Naive thymus-derived CD4-positive, alpha-beta T cell (primary cell): ENCODE measurements at regions of chrX and their contacts with region 1.

Region 1: DNA sequence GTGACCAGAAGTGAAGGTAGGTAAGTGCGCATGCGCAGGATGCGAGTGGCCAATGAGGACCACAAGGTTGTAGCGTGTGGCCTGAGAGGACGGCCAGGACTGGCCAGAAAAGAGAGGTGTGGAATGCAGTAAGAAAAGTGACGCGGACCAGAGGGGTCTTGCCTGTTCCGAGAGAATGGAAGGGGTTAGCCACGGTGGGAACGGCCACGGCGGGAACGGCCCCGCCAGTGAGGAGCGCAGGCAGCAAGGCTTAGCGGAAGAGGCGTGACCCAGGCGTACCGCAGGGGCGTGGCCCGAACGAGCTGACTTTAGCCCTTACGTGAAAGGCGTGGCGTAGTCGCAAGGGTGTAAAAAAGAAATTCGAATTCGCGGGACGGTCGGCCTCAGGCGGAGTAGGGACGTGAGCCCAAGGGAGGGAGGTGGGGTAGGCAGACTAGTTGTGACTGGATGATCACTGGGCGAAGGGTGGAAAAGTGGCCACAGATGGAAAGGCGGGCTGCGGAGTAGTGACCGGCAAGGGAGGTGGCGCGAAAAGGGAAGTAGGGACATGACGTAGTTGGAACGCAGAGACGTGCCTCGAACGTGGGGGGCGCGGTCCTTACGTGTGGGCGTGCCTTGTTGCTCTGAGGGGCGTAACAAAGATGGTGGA is 10.4 kb upstream of the CLTRN start:
- DNase-seq: peak; percentile 70 to 99 (median 96)
- ATAC-seq: peak; percentile 90
- H3K4me3 ChIP-seq: peak overlapping the region; percentile 87
- H3K4me3 Mint-ChIP-seq: no peak overlapping the region
- H3K27ac ChIP-seq: peak overlapping the region; percentile 96
- H3K27ac Mint-ChIP-seq: no peak overlapping the region
- H3K4me1 ChIP-seq: peaks cover 5 to 11% of the 10 kb centered on the region in 2 donors
- H3K4me1 Mint-ChIP-seq: peaks cover 0 to 17% (median 12%) of the 10 kb centered on the region in 7 donors
- H3K27me3 ChIP-seq: no peaks in the 10 kb centered on the region
- H3K27me3 Mint-ChIP-seq: peaks cover 0 to 5% (median 0%) of the 10 kb centered on the region in 5 donors

Region 2: GRCh38 chrX:15493118-15493962 is 181.6 kb before region 1 on chrX and contains the start of gene PIR:
- CTCF ChIA-PET with region 1: interaction called, 3 read pairs
- POLR2A ChIA-PET with region 1: no interaction called
- intact Hi-C with region 1: loop called (anchors 1 to 10 kb)
- DNase-seq: peak in 8 of 9 donors; percentile 3 to 72 (median 16)
- ATAC-seq: peak; percentile 88
- H3K4me3 ChIP-seq: peak within 1 kb of the TSS; percentile 46
- H3K4me3 Mint-ChIP-seq: peak within 1 kb of the TSS; percentile 75 to 85 (median 82)
- H3K27ac ChIP-seq: no peak within 1 kb of the TSS
- H3K27ac Mint-ChIP-seq: peak within 1 kb of the TSS in 1 of 9 donors; percentile 58
- H3K4me1 ChIP-seq: no peaks in the 10 kb centered on the region
- H3K4me1 Mint-ChIP-seq: peaks cover 2 to 18% (median 9%) of the 10 kb centered on the region in 7 donors
- H3K27me3 ChIP-seq: no peaks in the 10 kb centered on the region
- H3K27me3 Mint-ChIP-seq: peaks cover 0 to 6% (median 4%) of the 10 kb centered on the region in 5 donors
- total RNA-seq, gene PIR: 0.49 to 4.6 (median 0.70) TPM in 3 of 5 experiments, not detected in the others

Region 3: GRCh38 chrX:15737960-15738902 is 63.3 kb after region 1 on chrX and contains the start of gene CA5B:
- CTCF ChIA-PET with region 1: no interaction called
- POLR2A ChIA-PET with region 1: interaction called, 7 read pairs
- intact Hi-C with region 1: loop called (anchors 1 kb)
- DNase-seq: peak; percentile 93 to 100 (median 98)
- ATAC-seq: peak; percentile 98
- H3K4me3 ChIP-seq: peak within 1 kb of the TSS; percentile 82
- H3K4me3 Mint-ChIP-seq: peak within 1 kb of the TSS; percentile 89 to 99 (median 94)
- H3K27ac ChIP-seq: peak within 1 kb of the TSS; percentile 72
- H3K27ac Mint-ChIP-seq: peak within 1 kb of the TSS; percentile 71 to 95 (median 91)
- H3K4me1 ChIP-seq: peaks cover 16 to 19% of the 10 kb centered on the region in 2 donors
- H3K4me1 Mint-ChIP-seq: peaks cover 18 to 60% (median 43%) of the 10 kb centered on the region in 7 donors
- H3K27me3 ChIP-seq: no peaks in the 10 kb centered on the region
- H3K27me3 Mint-ChIP-seq: peaks cover 0 to 2% (median 0%) of the 10 kb centered on the region in 5 donors
- total RNA-seq, gene CA5B: 16.4 to 64.6 (median 39.5) TPM

Region 4: DNA sequence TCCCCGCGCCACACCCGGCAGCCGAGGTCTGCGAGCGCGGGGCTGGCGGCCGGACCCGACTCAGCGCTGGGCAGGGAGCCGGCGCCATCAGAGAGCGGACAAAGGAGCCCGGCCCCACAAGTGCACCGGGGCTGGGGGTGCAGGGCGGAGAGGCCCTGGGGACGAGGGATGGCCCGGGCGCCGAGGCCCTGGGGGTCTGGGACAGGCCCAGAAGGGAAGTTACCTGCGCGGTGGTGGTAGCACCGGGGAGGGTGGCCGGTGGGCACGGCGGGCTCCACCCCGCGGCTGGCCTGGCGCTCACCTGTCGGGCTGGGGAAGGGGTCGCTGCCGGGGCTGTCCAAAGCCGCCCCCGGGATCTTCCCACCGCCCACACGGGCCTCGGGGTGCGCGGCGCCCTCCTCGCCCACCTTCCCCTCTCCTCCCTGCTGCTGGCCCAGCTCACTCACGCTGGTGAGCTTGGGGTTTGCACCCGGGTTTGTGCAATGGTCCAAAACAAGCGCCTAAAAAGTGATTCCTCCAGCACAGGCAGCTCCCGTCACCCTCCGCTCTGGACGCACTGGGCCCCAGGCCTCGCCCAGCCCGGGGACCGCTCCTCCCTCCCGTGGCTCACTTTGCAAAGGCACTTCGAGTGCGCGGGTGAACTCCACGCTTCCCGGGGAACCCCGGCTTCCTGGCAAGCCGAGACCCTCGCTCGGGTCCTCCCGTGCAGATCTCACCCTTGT is 1037.3 kb after region 1 on chrX and contains the start of gene CTPS2:
- CTCF ChIA-PET with region 1: no interaction called
- POLR2A ChIA-PET with region 1: no interaction called
- intact Hi-C with region 1: loop called in 1 of 2 experiments (anchors 1 kb)
- DNase-seq: peak; percentile 29 to 49 (median 41)
- ATAC-seq: peak; percentile 92
- H3K4me3 ChIP-seq: peak within 1 kb of the TSS; percentile 60
- H3K4me3 Mint-ChIP-seq: peak within 1 kb of the TSS; percentile 87 to 93 (median 90)
- H3K27ac ChIP-seq: peak within 1 kb of the TSS; percentile 70
- H3K27ac Mint-ChIP-seq: peak within 1 kb of the TSS; percentile 82 to 94 (median 89)
- H3K4me1 ChIP-seq: no peaks in the 10 kb centered on the region
- H3K4me1 Mint-ChIP-seq: peaks cover 0 to 19% (median 15%) of the 10 kb centered on the region in 7 donors
- H3K27me3 ChIP-seq: no peaks in the 10 kb centered on the region
- H3K27me3 Mint-ChIP-seq: no peaks in the 10 kb centered on the region
- total RNA-seq, gene CTPS2: 5.2 to 8.9 (median 6.3) TPM

Region 5: GRCh38 chrX:16786139-16786790 is 1111.3 kb after region 1 on chrX and contains the start of gene TXLNG:
- CTCF ChIA-PET with region 1: no interaction called
- POLR2A ChIA-PET with region 1: no interaction called
- intact Hi-C with region 1: loop called (anchors 1 kb)
- DNase-seq: peak; percentile 81 to 98 (median 97)
- ATAC-seq: peak; percentile 97
- H3K4me3 ChIP-seq: peak within 1 kb of the TSS; percentile 94
- H3K4me3 Mint-ChIP-seq: peak within 1 kb of the TSS; percentile 95 to 99 (median 97)
- H3K27ac ChIP-seq: peak within 1 kb of the TSS; percentile 88
- H3K27ac Mint-ChIP-seq: peak within 1 kb of the TSS; percentile 78 to 94 (median 90)
- H3K4me1 ChIP-seq: peaks cover 0 to 3% of the 10 kb centered on the region in 2 donors
- H3K4me1 Mint-ChIP-seq: peaks cover 4 to 42% (median 12%) of the 10 kb centered on the region in 7 donors
- H3K27me3 ChIP-seq: no peaks in the 10 kb centered on the region
- H3K27me3 Mint-ChIP-seq: no peaks in the 10 kb centered on the region
- total RNA-seq, gene TXLNG: 11.9 to 23.1 (median 17.3) TPM